Calu3 (cell line): ENCODE measurements at regions of chr6 and their contacts with region 1.

Region 1: GRCh38 chr6:77466055-77466450 is 2.8 kb upstream of the HTR1B start:
- DNase-seq: peak; percentile 69
- H3K4me3 Mint-ChIP-seq: peak overlapping the region; percentile 69
- H3K27ac Mint-ChIP-seq: peak overlapping the region; percentile 22
- H3K4me1 Mint-ChIP-seq: peaks cover 28% of the 10 kb centered on the region
- H3K27me3 Mint-ChIP-seq: peaks cover 53% of the 10 kb centered on the region
- CTCF ChIP-seq: peak; percentile 65

Region 2: DNA sequence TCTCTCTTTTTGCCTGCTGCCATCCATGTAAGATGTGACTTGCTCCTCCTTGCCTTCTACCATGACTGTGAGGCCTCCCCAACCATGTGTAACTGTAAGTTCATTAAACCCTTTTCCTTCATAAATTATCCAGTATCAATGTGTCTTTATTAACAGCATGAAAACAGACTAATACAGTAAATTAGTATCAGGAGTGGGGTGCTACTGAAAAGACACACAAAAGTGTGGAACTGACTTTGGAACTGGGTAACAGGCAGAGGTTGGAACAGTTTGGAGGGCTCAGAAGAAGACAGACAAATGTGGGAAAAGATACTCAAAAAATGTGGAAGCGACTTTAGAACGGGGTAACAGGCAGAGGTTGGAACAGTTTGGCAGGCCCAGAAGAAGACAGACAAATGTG is 192.1 kb before region 1 on chr6:
- CTCF ChIA-PET with region 1: no interaction called
- intact Hi-C with region 1: no loop called
- DNase-seq: no peak
- H3K4me3 Mint-ChIP-seq: no peak overlapping the region
- H3K27ac Mint-ChIP-seq: no peak overlapping the region
- H3K4me1 Mint-ChIP-seq: no peaks in the 10 kb centered on the region
- H3K27me3 Mint-ChIP-seq: no peaks in the 10 kb centered on the region
- CTCF ChIP-seq: no peak

Region 3: DNA sequence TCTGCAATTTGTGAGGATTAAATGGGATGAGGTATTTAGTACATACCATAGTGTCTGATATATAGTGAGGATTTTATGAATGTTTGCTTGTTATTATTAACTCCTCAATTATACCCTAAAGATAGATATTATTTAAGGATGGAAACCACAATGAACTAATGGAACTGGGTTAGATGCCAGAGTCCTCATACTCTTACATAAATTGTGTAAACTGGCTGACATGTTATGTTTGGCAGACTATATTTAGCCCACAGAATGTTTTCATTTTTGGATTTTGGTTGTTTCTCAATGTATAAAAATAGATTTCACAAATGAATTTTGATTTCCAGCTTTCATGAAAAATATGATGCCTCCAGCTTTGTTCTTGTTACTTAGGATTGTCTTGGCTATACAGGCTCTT is 40.4 kb before region 1 on chr6:
- CTCF ChIA-PET with region 1: no interaction called
- intact Hi-C with region 1: no loop called
- DNase-seq: no peak
- H3K4me3 Mint-ChIP-seq: no peak overlapping the region
- H3K27ac Mint-ChIP-seq: no peak overlapping the region
- H3K4me1 Mint-ChIP-seq: no peaks in the 10 kb centered on the region
- H3K27me3 Mint-ChIP-seq: no peaks in the 10 kb centered on the region
- CTCF ChIP-seq: no peak

Region 4: DNA sequence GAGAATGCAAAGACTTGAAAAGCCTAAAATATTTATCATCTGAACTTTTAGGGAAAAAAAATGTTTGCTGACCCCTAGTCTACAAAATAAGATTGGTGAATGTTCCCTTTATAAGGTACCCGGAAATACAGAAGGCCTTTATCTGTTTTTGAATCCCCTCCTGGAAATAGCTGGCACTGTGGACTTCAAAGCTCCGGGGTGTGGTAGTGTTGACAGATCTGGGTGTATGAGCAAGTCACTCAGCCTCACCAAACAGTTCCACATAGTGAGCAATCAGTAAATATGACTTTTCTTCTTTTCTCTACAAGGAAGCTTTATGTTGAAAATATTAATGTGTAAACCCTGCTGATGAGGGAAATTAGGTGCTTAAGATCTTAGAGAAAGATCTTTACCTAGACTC is 26.5 kb after region 1 on chr6:
- CTCF ChIA-PET with region 1: no interaction called
- intact Hi-C with region 1: no loop called
- DNase-seq: peak; percentile 40
- H3K4me3 Mint-ChIP-seq: no peak overlapping the region
- H3K27ac Mint-ChIP-seq: no peak overlapping the region
- H3K4me1 Mint-ChIP-seq: peaks cover 20% of the 10 kb centered on the region
- H3K27me3 Mint-ChIP-seq: no peaks in the 10 kb centered on the region
- CTCF ChIP-seq: no peak

Region 5: DNA sequence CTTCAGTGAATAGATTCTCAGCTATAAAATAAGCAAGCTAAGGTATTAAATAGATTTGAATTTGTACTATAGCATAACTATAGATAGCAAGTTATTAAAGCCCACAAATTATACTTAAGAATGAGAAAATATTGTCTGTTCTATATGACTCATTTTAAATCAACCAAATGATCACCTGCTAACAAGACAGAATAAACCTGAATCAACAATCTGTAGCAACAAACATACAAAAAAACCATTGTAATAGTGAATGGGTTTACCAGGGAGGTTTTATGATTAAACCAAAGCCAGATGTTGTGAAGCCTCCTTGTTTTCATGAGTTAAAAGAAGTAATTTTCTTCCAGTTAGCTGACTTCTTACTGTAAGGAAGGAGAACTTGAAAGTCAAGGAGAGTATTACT is 69.1 kb after region 1 on chr6:
- CTCF ChIA-PET with region 1: no interaction called
- intact Hi-C with region 1: loop called (anchors 5 kb)
- DNase-seq: no peak
- H3K4me3 Mint-ChIP-seq: no peak overlapping the region
- H3K27ac Mint-ChIP-seq: no peak overlapping the region
- H3K4me1 Mint-ChIP-seq: no peaks in the 10 kb centered on the region
- H3K27me3 Mint-ChIP-seq: no peaks in the 10 kb centered on the region
- CTCF ChIP-seq: no peak

Region 6: DNA sequence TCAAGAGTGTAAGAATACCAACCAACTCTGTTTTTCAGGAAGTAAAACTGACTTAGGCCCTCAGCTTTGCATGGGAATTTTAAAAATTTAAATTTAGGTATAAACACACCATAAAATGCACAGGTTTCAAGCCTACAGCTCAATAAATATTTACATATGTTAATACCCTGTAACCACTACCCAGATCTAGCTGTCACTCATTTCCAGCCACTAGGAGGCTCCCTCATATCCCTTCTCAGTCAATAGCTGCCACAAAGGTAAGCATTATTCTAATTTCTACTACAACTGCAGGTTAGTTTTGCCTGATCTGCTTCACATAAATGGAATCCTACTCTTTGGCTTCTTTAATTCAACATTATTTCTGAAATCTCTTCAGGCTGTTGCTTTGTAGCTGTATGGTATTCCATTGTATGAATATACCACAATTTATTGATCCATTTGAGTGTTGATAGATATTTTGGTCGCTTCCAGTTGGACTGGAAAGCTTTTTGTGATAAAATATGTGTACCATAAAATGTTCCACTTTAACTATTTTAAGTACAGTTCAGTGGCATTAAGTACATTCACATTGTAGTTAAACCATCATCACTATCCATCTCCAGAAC is 154.3 kb after region 1 on chr6:
- CTCF ChIA-PET with region 1: interaction called, 3 read pairs
- intact Hi-C with region 1: loop called (anchors 10 kb)
- DNase-seq: peak; percentile 41
- H3K4me3 Mint-ChIP-seq: no peak overlapping the region
- H3K27ac Mint-ChIP-seq: no peak overlapping the region
- H3K4me1 Mint-ChIP-seq: no peaks in the 10 kb centered on the region
- H3K27me3 Mint-ChIP-seq: no peaks in the 10 kb centered on the region
- CTCF ChIP-seq: no peak

Region 7: DNA sequence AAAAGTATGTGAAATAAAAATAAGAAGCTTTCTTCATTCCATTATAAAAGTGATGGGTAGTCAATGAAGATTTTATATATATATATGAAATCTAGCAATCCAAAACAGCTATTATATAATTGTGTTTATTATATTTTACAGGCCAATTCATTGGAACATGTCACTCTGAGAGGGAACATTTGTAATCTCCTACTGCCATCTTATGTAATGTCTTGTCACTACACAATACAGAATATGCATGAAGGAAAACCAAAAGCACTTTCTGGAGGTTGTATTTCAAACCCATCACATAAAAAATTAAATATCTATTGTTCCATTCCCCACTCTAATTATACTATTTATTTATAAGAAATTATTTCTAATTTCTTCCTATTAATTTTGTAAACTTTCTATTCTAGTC is 1369.8 kb after region 1 on chr6:
- CTCF ChIA-PET with region 1: no interaction called
- intact Hi-C with region 1: loop called (anchors 10 kb)
- DNase-seq: no peak
- H3K4me3 Mint-ChIP-seq: no peak overlapping the region
- H3K27ac Mint-ChIP-seq: no peak overlapping the region
- H3K4me1 Mint-ChIP-seq: no peaks in the 10 kb centered on the region
- H3K27me3 Mint-ChIP-seq: no peaks in the 10 kb centered on the region
- CTCF ChIP-seq: no peak